Gastrocnemius medialis (tissue), 4 donors: ENCODE measurements at regions of chr3 and their contacts with region 1.

Region 1: DNA sequence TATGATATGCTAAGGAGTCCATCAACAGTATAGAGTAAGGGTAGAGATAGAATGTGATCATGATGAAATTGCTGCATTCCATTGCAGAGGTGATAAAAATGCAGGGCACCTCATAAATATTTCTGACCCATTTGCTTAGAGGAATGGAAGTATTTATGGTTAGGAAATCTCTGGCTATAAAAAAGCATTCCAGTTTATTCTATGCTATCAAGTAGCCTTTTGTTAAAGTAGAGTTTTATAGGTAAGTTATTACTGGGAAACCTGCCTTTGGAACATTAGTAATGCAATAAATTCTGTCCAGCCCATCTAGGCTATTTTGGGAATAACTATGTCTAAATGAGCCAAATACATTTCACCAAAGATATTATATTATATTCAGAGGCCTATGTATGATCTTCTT is 19.8 kb upstream of the STRIT1 start:
- DNase-seq: no peak
- ATAC-seq: peak in 1 of 2 donors; percentile 37
- H3K4me3 ChIP-seq: no peak overlapping the region
- H3K27ac ChIP-seq: peak overlapping the region; percentile 71 to 79 (median 77)
- H3K4me1 ChIP-seq: peaks cover 35 to 38% of the 10 kb centered on the region in 2 donors
- H3K27me3 ChIP-seq: no peaks in the 10 kb centered on the region
- CTCF ChIP-seq: no peak
- POLR2A ChIP-seq: no peak

Region 2: DNA sequence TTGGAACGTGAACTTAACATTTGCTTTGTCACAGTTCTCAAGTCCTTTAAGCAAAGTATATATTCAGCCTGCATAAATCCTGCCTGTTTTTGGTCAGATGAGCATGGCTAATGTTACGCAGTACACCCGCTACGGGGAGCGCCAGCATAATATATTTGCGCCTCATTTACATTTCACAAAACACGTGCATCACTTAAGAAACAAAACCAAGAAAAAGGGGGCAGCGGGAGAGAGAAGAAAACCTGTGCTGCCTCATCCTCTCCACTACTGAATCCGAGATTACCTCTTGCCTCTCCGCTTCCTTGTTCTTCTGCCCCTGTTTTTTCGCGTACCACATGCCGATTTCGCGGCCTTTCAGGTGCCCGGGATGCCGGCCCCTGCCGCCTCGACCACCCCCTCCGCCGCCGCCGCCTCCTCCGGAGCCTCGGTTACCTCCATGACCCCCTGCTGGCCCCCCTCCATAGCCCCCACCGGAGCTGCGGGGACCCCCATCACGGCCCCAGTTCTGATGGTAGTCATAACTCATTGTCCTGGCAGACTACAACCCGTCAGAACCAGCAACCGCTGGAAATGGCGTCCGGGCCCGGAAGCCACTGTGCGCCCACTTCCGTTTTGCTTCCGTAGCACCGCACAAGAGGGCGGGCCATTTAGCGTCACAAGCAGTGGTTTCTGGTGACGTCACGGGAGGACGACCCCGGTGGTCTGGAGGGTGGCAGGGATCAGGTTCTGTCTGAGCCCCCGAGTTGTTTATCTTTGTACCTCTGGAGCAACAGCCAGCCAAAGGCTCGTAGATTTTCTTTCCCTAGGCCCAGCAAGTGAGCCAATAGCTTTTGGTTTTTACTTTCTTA is 989.2 kb before region 1 on chr3 and contains the start of gene DHX36:
- in situ Hi-C with region 1: no loop called
- intact Hi-C with region 1: loop called (anchors 5 kb)
- DNase-seq: peak; percentile 82 to 84
- ATAC-seq: peak; percentile 85 to 93
- H3K4me3 ChIP-seq: peak within 1 kb of the TSS; percentile 86 to 96 (median 89)
- H3K27ac ChIP-seq: peak within 1 kb of the TSS; percentile 89 to 97 (median 93)
- H3K4me1 ChIP-seq: peaks cover 33 to 47% of the 10 kb centered on the region in 2 donors
- H3K27me3 ChIP-seq: no peaks in the 10 kb centered on the region
- CTCF ChIP-seq: no peak
- POLR2A ChIP-seq: peak; percentile 72 to 81
- total RNA-seq, gene DHX36: 59.0 to 211 (median 143) TPM

Region 3: DNA sequence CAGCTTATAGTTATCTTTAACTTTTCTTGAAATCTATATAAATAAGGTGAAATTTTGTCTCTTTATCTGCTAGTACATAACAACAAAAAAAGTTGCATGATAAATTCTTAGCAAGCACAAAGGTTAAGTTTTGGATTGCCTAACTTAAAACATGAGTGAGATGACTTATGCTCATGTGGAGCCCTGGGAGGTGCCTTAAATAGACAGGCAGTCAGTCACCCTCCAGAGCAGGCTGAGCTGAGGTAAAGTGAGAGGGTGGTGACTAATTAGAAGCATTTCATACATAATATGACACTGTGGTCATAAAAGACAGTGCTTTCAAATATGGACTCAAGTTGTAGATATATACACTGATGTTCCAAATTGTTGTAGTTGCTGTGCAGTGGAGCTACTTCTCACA is 247.8 kb before region 1 on chr3:
- in situ Hi-C with region 1: no loop called
- intact Hi-C with region 1: loop called (anchors 2 kb)
- DNase-seq: peak; percentile 76 to 87
- ATAC-seq: peak; percentile 96
- H3K4me3 ChIP-seq: no peak overlapping the region
- H3K27ac ChIP-seq: peak overlapping the region; percentile 59 to 91 (median 82)
- H3K4me1 ChIP-seq: peaks cover 7 to 20% of the 10 kb centered on the region in 2 donors
- H3K27me3 ChIP-seq: no peaks in the 10 kb centered on the region
- CTCF ChIP-seq: no peak
- POLR2A ChIP-seq: no peak

Region 4: DNA sequence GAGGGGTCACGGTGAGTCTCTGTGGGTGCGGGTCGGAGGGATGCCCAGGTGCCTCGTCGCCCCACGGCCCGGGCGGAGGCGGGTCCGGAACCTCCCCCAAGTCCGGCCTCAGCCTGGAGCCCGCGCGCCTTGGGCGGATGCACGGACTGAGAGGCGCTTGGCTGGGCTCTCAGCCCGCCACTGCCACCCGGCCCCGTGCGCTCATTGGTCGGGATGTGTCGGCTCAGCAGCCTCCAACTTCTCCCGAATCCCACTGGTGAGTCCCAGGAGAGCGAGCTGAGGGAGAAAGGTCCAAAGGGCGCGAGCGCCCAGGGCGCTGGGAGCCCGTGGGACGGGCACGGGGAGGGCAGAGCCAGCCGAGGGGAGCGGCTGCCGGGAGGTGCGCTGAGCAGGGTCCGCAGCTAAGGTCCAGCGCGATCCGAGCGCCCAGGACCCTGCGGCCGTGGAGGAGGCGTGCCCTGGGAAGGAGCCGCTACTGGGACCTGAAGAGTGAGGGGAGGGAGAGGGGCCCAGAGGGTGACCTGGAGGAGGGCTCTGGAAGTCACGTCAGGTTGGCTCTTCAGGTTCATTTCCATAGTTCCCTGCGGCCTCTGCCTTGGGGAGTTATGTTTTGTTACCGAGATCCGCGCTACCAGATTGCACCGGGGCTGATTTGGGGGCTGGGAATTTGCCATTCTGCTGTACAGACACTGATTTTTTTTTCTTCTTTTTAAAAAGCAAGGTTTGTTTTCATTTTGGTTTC is 233.4 kb before region 1 on chr3 and contains the start of gene MME:
- in situ Hi-C with region 1: loop called in 1 of 4 experiments (anchors 25 kb)
- intact Hi-C with region 1: loop called (anchors 5 kb)
- DNase-seq: peak; percentile 56 to 63
- ATAC-seq: peak; percentile 84 to 87
- H3K4me3 ChIP-seq: peak within 1 kb of the TSS; percentile 69 to 79 (median 77)
- H3K27ac ChIP-seq: peak within 1 kb of the TSS; percentile 60 to 87 (median 82)
- H3K4me1 ChIP-seq: peaks cover 0 to 14% of the 10 kb centered on the region in 2 donors
- H3K27me3 ChIP-seq: peaks cover 0 to 6% (median 0%) of the 10 kb centered on the region in 3 donors
- CTCF ChIP-seq: no peak
- POLR2A ChIP-seq: peak; percentile 32 to 61
- total RNA-seq, gene MME: 40.9 to 95.4 (median 68.0) TPM

Region 5: GRCh38 chr3:155196131-155197021 is 116.9 kb before region 1 on chr3:
- in situ Hi-C with region 1: no loop called
- intact Hi-C with region 1: loop called (anchors 5 kb)
- DNase-seq: peak; percentile 29 to 37
- ATAC-seq: peak in 1 of 2 donors; percentile 37
- H3K4me3 ChIP-seq: no peak overlapping the region
- H3K27ac ChIP-seq: peak overlapping the region; percentile 92 to 93 (median 92)
- H3K4me1 ChIP-seq: peaks cover 51 to 52% of the 10 kb centered on the region in 2 donors
- H3K27me3 ChIP-seq: no peaks in the 10 kb centered on the region
- CTCF ChIP-seq: no peak
- POLR2A ChIP-seq: no peak